GM12878 (cell line): ENCODE measurements at regions of chr19 and their contacts with region 1.

Region 1: GRCh38 chr19:28633319-28634018 is 579.5 kb downstream of the UQCRFS1 start:
- DNase-seq: no peak
- ATAC-seq: peak; percentile 20; the same call in 1 of the 3 replicates
- H3K4me3 ChIP-seq: no peak overlapping the region
- H3K27ac ChIP-seq: no peak overlapping the region
- H3K4me1 ChIP-seq: no peaks in the 10 kb centered on the region
- H3K27me3 ChIP-seq: no peaks in the 10 kb centered on the region
- CTCF ChIP-seq: peak; percentile 52 to 63 (median 53); a peak in 5 of 6 replicates
- EP300 ChIP-seq: no peak
- POLR2A ChIP-seq: no peak
- RAD21 ChIP-seq: peak; percentile 51

Region 2: GRCh38 chr19:28554321-28555091 is 79.0 kb before region 1 on chr19:
- CTCF ChIA-PET with region 1: no interaction called
- POLR2A ChIA-PET with region 1: no interaction called
- RAD21 ChIA-PET with region 1: no interaction called
- SMC1A ChIA-PET with region 1: no interaction called
- in situ Hi-C with region 1: no loop called
- intact Hi-C with region 1: no loop called
- DNase-seq: no peak
- ATAC-seq: no peak
- H3K4me3 ChIP-seq: no peak overlapping the region
- H3K27ac ChIP-seq: no peak overlapping the region
- H3K4me1 ChIP-seq: no peaks in the 10 kb centered on the region
- H3K27me3 ChIP-seq: no peaks in the 10 kb centered on the region
- CTCF ChIP-seq: no peak
- EP300 ChIP-seq: no peak
- POLR2A ChIP-seq: no peak
- RAD21 ChIP-seq: no peak

Region 3: GRCh38 chr19:28596561-28597071 is 36.9 kb before region 1 on chr19:
- CTCF ChIA-PET with region 1: interaction called, 7 read pairs
- POLR2A ChIA-PET with region 1: no interaction called
- RAD21 ChIA-PET with region 1: interaction called, 18 read pairs
- SMC1A ChIA-PET with region 1: no interaction called
- in situ Hi-C with region 1: no loop called
- intact Hi-C with region 1: no loop called
- DNase-seq: no peak
- ATAC-seq: no peak
- H3K4me3 ChIP-seq: no peak overlapping the region
- H3K27ac ChIP-seq: no peak overlapping the region
- H3K4me1 ChIP-seq: no peaks in the 10 kb centered on the region
- H3K27me3 ChIP-seq: no peaks in the 10 kb centered on the region
- CTCF ChIP-seq: no peak
- EP300 ChIP-seq: no peak
- POLR2A ChIP-seq: no peak
- RAD21 ChIP-seq: no peak

Region 4: DNA sequence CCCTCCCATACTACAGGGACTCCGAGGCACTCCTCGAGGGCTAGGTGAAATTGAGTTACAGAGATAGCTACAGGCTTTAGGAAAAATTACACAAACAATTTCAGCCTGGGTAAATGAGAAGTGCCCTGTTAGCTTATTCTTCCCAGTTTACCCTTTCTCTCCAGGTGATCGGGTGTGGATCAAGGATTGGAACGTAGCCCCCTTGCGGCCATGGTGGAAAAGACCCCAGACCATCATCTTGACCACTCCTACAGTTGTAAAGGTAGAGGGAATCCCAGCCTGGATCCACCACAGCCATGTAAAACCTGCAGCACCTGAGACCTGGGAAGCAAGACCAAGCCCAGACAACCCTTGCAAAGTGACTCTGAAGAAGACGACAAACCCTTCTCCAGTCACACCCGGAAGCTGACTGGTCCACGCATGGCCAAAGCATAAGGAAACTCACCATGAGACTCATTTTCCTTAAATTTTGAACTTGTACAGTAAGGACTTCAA is 21.1 kb before region 1 on chr19:
- CTCF ChIA-PET with region 1: interaction called, 19 read pairs
- POLR2A ChIA-PET with region 1: no interaction called
- RAD21 ChIA-PET with region 1: interaction called, 4 read pairs
- SMC1A ChIA-PET with region 1: interaction called, 9 read pairs
- in situ Hi-C with region 1: no loop called
- intact Hi-C with region 1: no loop called
- DNase-seq: no peak
- ATAC-seq: no peak
- H3K4me3 ChIP-seq: no peak overlapping the region
- H3K27ac ChIP-seq: no peak overlapping the region
- H3K4me1 ChIP-seq: no peaks in the 10 kb centered on the region
- H3K27me3 ChIP-seq: no peaks in the 10 kb centered on the region
- CTCF ChIP-seq: no peak
- EP300 ChIP-seq: no peak
- POLR2A ChIP-seq: no peak
- RAD21 ChIP-seq: no peak

Region 5: GRCh38 chr19:28619816-28620429 is 13.5 kb before region 1 on chr19:
- CTCF ChIA-PET with region 1: interaction called, 28 read pairs
- POLR2A ChIA-PET with region 1: no interaction called
- RAD21 ChIA-PET with region 1: interaction called, 4 read pairs
- SMC1A ChIA-PET with region 1: interaction called, 8 read pairs
- in situ Hi-C with region 1: no loop called
- intact Hi-C with region 1: no loop called
- DNase-seq: no peak
- ATAC-seq: no peak
- H3K4me3 ChIP-seq: no peak overlapping the region
- H3K27ac ChIP-seq: no peak overlapping the region
- H3K4me1 ChIP-seq: no peaks in the 10 kb centered on the region
- H3K27me3 ChIP-seq: no peaks in the 10 kb centered on the region
- CTCF ChIP-seq: no peak
- EP300 ChIP-seq: no peak
- POLR2A ChIP-seq: no peak
- RAD21 ChIP-seq: no peak